ENCODE measurements at regions of chr6 and their contacts with region 1.

Region 1: DNA sequence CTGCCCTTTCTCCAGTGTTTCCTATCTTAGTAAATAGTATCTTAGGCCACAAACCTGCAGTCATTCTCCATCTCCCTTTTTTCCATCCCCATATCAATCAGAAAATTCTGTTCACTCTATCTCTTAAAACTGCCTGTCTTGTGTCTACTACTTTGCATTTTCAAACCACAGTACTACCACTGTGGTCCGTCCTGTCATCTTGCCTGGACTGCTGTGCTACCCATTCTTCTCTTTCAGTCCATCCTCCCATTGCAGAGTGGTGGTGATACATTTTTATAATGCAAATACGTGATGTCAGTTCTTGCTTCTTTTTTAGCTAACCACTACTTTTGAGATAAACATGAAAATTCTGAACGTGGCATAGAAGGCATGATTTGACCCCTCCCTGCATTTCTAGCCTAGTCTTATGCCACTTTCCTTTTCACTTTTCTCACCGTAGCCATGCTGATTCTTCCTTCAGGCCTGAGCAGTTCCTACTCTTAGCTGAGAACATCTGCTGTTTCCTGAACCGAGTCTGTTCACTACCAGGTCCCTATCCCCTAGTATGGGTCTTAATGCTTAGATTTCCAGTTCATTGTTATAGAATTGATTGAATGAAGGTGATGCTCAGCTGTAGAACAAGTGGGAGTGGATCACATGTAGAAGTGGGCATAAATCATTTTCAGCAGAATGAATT is 13.8 kb downstream of the TBPL1 start:
- DNase-seq: no peak
- H3K4me3 ChIP-seq: no peak overlapping the region
- H3K27ac ChIP-seq: no peak overlapping the region
- H3K4me1 ChIP-seq: peaks cover 6 to 8% of the 10 kb centered on the region in 2 experiments; a peak in 3 of 4 replicates
- H3K27me3 ChIP-seq: no peaks in the 10 kb centered on the region
- CTCF ChIP-seq: no peak
- EP300 ChIP-seq: no peak
- RAD21 ChIP-seq: no peak

Region 2: GRCh38 chr6:133952815-133953633 is 13.8 kb before region 1 on chr6 and contains the start of gene TBPL1:
- CTCF ChIA-PET with region 1: interaction called, 16 read pairs
- POLR2A ChIA-PET with region 1: no interaction called
- DNase-seq: peak; percentile 95
- H3K4me3 ChIP-seq: peak within 1 kb of the TSS; percentile 77 to 98
- H3K27ac ChIP-seq: peak within 1 kb of the TSS; percentile 92 to 94
- H3K4me1 ChIP-seq: peaks cover 6 to 24% of the 10 kb centered on the region in 2 experiments; a peak in 3 of 4 replicates
- H3K27me3 ChIP-seq: no peaks in the 10 kb centered on the region
- CTCF ChIP-seq: no peak
- EP300 ChIP-seq: peak; percentile 35 to 37; a peak in 1 of 4 replicates
- RAD21 ChIP-seq: no peak
- polyA plus RNA-seq, gene TBPL1: 16.3 and 22.4 TPM in 2 replicates

Region 3: DNA sequence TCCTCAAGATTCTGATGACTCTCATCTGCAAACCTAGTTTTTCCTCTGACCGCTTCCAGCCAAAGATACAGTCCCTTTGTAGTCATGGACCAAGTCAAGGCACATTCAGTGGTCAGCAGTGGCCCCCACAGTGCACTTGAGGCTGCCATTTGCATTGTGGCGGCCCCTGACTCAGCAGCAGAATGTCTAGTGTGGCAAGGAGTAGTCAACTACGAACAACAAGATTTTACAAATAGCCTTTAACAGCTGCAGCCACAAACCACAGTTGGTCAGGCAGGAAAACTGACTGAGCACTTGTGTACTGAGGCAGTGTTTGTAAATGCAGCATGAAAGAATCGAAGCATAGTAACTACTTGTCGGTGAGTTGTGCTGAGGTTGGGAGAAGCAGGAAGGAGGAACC is 36.0 kb after region 1 on chr6:
- CTCF ChIA-PET with region 1: no interaction called
- POLR2A ChIA-PET with region 1: no interaction called
- DNase-seq: no peak
- H3K4me3 ChIP-seq: no peak overlapping the region
- H3K27ac ChIP-seq: no peak overlapping the region
- H3K4me1 ChIP-seq: peaks cover 0 to 3% of the 10 kb centered on the region in 2 experiments; a peak in 1 of 4 replicates
- H3K27me3 ChIP-seq: no peaks in the 10 kb centered on the region
- CTCF ChIP-seq: no peak
- EP300 ChIP-seq: no peak
- RAD21 ChIP-seq: no peak

Measured in SK-N-SH (cell line).